Caco-2 (cell line): ENCODE measurements at regions of chr12 and their contacts with region 1.

Region 1: DNA sequence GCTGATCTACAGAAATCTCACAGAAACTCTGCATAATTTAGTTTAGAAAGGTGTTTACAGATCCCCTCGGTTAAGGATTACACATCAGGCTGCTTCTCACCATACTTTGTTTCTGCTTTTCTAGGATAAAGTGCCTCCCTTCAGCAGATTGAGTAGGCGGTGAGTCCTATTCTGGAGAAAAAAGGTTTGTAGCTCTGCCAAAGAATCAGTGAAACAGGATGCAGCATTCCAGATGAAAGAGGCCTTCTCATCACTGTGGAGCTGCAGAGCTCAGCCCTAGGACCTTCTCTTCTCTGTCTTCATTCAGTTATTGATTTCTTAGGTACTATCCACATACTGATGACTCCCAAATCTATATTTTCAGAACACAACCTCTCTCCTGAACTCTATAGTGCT is 155.5 kb upstream of the KRR1 start:
- DNase-seq: peak in 1 of 2 experiments; percentile 33
- H3K4me3 ChIP-seq: no peak overlapping the region
- H3K4me3 Mint-ChIP-seq: peak overlapping the region; percentile 25
- H3K27ac Mint-ChIP-seq: peak overlapping the region; percentile 31
- H3K4me1 ChIP-seq: peaks cover 37% of the 10 kb centered on the region
- H3K4me1 Mint-ChIP-seq: peaks cover 25% of the 10 kb centered on the region
- H3K27me3 ChIP-seq: no peaks in the 10 kb centered on the region
- H3K27me3 Mint-ChIP-seq: no peaks in the 10 kb centered on the region
- CTCF ChIP-seq: no peak

Region 2: DNA sequence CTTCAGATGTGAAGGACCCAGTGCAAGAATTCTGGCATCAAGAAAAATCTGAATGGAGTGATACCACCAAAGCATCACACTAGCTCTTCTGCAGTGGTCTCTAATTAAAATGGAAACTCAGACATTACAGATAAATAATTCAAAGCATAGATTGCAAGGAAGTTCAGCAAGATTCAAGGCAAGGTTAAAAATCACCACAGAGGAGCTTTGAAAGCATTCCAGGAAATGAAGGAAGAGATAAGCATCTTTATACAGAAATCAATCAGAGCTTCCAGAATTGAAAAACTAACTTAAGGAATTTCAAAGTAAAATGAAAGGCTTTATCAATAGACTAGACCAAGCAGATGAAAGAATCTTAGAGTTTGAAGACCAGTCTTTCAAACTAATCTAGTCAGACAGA is 206.7 kb before region 1 on chr12:
- CTCF ChIA-PET with region 1: no interaction called
- POLR2A ChIA-PET with region 1: no interaction called
- intact Hi-C with region 1: no loop called
- DNase-seq: no peak
- H3K4me3 ChIP-seq: no peak overlapping the region
- H3K4me3 Mint-ChIP-seq: no peak overlapping the region
- H3K27ac Mint-ChIP-seq: no peak overlapping the region
- H3K4me1 ChIP-seq: no peaks in the 10 kb centered on the region
- H3K4me1 Mint-ChIP-seq: no peaks in the 10 kb centered on the region
- H3K27me3 ChIP-seq: no peaks in the 10 kb centered on the region
- H3K27me3 Mint-ChIP-seq: no peaks in the 10 kb centered on the region
- CTCF ChIP-seq: no peak

Region 3: DNA sequence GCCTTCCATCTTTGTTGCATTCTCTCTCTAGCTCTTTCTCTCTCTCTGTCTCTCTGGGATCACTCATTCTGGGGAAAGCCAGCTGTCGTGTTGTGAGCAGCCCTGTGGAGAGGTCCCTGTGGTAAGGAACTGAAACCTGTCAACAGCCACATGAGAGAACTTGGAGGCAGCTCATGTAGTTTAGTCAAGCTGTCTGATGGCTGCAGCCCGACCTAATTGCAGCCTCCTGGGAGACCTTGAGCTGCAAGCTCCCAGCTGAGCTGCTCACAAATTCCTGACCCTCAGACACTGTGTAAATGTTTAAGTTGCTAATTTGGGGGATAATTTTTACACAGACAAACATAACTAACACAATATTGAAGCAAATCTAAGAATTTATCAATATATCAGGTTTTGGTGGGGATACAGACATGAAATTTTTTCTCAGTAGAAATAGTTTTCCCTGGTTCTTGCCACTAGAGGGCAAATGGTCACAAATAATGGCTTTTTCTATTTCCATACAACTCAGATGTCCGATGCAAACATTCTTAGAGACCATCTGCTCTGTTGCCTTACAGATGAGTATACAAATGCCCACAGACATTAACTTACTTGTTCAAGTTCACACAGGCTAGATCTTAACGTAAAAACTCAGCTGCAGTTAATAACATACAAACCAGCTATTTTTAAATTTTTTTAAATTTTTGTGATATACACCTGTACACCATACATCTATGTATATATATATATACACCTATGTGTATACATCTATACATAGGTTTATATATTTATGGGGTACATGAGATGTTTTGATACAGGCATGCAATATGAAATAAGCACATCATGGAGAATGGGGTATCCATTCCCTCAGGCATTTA is 140.1 kb before region 1 on chr12:
- CTCF ChIA-PET with region 1: no interaction called
- POLR2A ChIA-PET with region 1: no interaction called
- intact Hi-C with region 1: loop called (anchors 2 kb)
- DNase-seq: peak; percentile 28 to 37
- H3K4me3 ChIP-seq: no peak overlapping the region
- H3K4me3 Mint-ChIP-seq: no peak overlapping the region
- H3K27ac Mint-ChIP-seq: no peak overlapping the region
- H3K4me1 ChIP-seq: no peaks in the 10 kb centered on the region
- H3K4me1 Mint-ChIP-seq: peaks cover 17% of the 10 kb centered on the region
- H3K27me3 ChIP-seq: no peaks in the 10 kb centered on the region
- H3K27me3 Mint-ChIP-seq: peaks cover 2% of the 10 kb centered on the region
- CTCF ChIP-seq: peak; percentile 75 to 77

Region 4: DNA sequence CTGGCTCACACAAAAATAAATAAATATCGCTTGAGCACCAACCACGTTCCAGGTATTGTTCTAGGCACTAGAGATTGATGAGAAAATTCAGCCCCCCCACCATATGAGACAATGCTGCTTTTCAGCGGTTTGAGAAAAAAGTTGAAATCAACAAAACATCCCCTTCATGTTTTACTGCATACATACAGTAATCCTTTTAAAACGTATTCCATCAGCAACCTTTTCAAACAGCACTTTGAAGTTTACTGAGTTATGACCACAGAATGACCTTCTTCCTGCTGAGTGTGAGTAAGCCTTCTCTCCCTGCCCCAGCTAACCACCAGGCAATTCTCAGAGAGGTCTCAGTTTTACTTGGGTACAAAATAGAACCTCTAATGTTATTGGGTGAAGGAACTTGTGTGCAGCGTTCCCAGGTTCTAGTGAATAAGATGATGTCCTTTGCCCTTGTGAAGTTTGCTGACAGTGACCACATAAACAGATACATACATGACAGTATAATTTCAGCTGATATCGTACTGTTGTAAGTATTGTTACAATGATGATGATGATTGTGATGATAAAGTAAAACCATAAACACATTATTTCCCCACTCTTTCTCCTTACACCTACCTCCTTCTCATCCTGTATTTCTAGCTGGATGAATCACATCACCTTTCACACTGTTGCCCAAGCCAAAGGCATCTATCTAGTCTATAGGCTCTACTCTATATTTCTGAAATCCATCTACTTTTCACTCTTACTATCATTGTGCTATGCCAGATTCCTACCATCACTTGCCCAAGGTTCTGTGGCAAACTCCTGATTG is 31.1 kb before region 1 on chr12:
- CTCF ChIA-PET with region 1: no interaction called
- POLR2A ChIA-PET with region 1: no interaction called
- intact Hi-C with region 1: loop called (anchors 1 kb)
- DNase-seq: no peak
- H3K4me3 ChIP-seq: no peak overlapping the region
- H3K4me3 Mint-ChIP-seq: no peak overlapping the region
- H3K27ac Mint-ChIP-seq: no peak overlapping the region
- H3K4me1 ChIP-seq: no peaks in the 10 kb centered on the region
- H3K4me1 Mint-ChIP-seq: peaks cover 16% of the 10 kb centered on the region
- H3K27me3 ChIP-seq: no peaks in the 10 kb centered on the region
- H3K27me3 Mint-ChIP-seq: no peaks in the 10 kb centered on the region
- CTCF ChIP-seq: no peak

Region 5: DNA sequence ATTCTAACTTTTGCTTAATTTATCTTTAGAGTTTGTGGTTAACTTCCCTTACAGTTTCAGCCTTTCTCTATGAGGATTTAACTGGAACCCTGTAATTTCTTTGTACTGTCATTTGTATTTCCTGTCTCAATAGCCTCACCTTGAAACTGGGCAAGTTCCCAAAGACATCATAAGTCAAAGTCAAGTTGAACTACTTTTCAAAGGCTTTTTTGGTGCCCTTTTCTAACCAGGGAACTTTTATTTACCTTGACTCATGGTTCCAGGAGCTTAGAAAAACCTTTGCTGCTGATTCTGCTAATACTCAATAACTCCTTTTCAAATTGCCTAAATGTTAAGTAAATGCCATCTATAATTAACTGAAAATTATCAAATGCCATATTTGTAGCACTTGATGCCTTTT is 45.3 kb after region 1 on chr12:
- CTCF ChIA-PET with region 1: no interaction called
- POLR2A ChIA-PET with region 1: no interaction called
- intact Hi-C with region 1: loop called (anchors 1 kb)
- DNase-seq: no peak
- H3K4me3 ChIP-seq: no peak overlapping the region
- H3K4me3 Mint-ChIP-seq: no peak overlapping the region
- H3K27ac Mint-ChIP-seq: no peak overlapping the region
- H3K4me1 ChIP-seq: peaks cover 28% of the 10 kb centered on the region
- H3K4me1 Mint-ChIP-seq: peaks cover 33% of the 10 kb centered on the region
- H3K27me3 ChIP-seq: no peaks in the 10 kb centered on the region
- H3K27me3 Mint-ChIP-seq: no peaks in the 10 kb centered on the region
- CTCF ChIP-seq: no peak

Region 6: DNA sequence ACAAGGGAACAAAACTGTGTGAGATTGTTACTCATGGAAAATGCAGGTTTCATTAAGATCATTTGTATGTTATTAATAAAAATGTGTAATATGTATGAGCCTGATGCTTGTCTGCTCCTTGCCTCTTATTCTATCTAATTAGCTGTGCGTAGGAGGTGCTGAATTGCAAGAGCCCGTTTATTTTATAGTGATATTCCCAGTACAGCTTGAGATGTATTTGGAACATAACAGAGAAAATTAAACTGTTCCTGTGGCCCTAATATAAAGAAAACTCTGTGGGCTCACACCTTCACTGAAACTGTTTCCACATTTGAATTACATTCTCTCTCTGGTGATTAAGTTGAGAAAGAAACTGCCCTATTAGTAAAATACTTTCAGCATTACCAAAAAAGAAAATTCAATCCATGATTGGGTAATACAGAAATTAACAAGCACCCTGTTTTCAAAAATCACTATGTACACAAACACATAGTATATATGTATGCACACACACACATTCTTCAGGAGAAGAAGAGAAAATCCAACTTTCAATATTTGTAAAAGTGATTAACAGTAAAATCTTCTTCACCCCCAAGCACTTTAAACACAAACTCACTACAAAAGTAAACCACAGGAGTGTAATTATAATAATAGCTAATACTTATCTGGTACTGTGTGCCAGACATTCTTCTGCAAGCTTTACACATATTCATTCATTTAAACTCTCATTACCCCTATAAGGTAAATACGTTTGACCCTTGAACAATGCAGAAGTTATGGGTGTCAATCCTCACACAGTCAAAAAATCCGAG is 131.4 kb after region 1 on chr12:
- CTCF ChIA-PET with region 1: no interaction called
- POLR2A ChIA-PET with region 1: no interaction called
- intact Hi-C with region 1: loop called (anchors 1 kb)
- DNase-seq: peak in 1 of 2 experiments; percentile 26
- H3K4me3 ChIP-seq: no peak overlapping the region
- H3K4me3 Mint-ChIP-seq: no peak overlapping the region
- H3K27ac Mint-ChIP-seq: no peak overlapping the region
- H3K4me1 ChIP-seq: peaks cover 9% of the 10 kb centered on the region; the same call in 1 of the 2 replicates
- H3K4me1 Mint-ChIP-seq: no peaks in the 10 kb centered on the region
- H3K27me3 ChIP-seq: no peaks in the 10 kb centered on the region
- H3K27me3 Mint-ChIP-seq: no peaks in the 10 kb centered on the region
- CTCF ChIP-seq: no peak

Region 7: GRCh38 chr12:75990189-75990912 is 323.4 kb after region 1 on chr12:
- CTCF ChIA-PET with region 1: no interaction called
- POLR2A ChIA-PET with region 1: no interaction called
- intact Hi-C with region 1: loop called (anchors 1 kb)
- DNase-seq: peak in 1 of 2 experiments; percentile 77
- H3K4me3 ChIP-seq: no peak overlapping the region
- H3K4me3 Mint-ChIP-seq: peak overlapping the region; percentile 18
- H3K27ac Mint-ChIP-seq: peak overlapping the region; percentile 89
- H3K4me1 ChIP-seq: peaks cover 79% of the 10 kb centered on the region
- H3K4me1 Mint-ChIP-seq: peaks cover 46% of the 10 kb centered on the region
- H3K27me3 ChIP-seq: no peaks in the 10 kb centered on the region
- H3K27me3 Mint-ChIP-seq: no peaks in the 10 kb centered on the region
- CTCF ChIP-seq: no peak